ENCODE measurements at regions of chr1 and their contacts with region 1.

Region 1: DNA sequence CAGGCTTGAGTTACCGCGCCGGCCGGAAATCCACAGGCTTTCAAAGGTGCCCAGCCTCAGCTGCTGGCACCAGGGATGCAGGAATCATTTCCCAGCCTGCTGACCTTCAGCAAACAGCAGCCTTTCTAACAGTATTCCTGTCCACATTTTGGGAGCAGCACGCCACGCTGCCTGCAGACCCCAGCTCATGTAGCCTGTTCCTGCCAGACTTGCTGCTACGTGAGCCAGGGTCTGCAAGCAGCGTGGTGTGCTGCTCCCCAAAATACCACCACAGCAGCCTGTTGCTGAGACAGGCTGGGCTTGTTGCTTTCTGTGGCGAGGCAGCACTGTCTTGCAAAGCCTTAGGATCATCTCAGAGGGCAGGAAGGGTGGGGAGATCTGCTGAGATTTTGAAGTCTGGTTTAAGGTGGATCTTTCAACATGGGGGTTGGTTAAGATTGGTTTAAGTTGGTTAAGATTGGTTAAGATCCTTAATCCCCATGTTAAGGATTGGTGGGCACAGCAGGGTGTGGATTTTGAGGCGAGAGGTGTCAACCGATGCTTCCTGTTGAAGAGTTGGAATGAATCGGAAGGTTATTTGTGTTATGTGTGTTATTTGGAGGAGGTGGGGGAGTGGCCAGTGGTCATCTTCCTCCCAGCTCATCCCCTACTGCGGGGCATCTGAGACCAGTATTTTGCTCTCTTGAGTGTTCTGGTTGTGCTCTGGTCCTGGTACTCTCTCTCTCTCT is 12.9 kb downstream of the FAAH start:
- DNase-seq: no peak
- CTCF ChIP-seq: no peak

Region 2: DNA sequence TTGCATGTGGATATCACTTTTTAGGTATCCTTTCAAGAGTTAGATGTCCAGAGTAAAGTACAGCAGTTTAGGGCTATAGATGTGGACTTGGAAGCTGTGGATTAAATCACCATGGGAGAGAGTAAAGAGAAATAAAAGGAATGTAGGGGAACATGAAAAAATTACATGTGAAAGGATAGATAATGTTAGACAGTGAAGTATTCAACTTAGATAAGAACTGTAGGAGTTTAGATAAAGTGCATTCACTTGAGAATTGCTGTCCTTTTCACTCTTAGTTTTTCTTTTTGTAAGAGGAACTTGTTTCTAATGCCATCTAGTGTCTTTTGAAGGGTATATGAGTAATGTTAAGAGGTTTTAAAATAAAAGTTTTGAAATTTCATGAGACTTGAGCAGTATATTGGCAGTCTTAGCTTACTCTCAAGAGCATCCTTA is 563.6 kb before region 1 on chr1:
- CTCF ChIA-PET with region 1: no interaction called
- POLR2A ChIA-PET with region 1: no interaction called
- DNase-seq: peak; percentile 32
- CTCF ChIP-seq: peak; percentile 24

Region 3: GRCh38 chr1:46303038-46303871 is 103.8 kb before region 1 on chr1 and contains the starts of genes LRRC41 and UQCRH:
- CTCF ChIA-PET with region 1: no interaction called
- POLR2A ChIA-PET with region 1: no interaction called
- DNase-seq: peak; percentile 91
- CTCF ChIP-seq: no peak

Region 4: GRCh38 chr1:46418976-46419375 is 11.9 kb after region 1 on chr1:
- CTCF ChIA-PET with region 1: interaction called, 11 read pairs
- POLR2A ChIA-PET with region 1: no interaction called
- DNase-seq: no peak
- CTCF ChIP-seq: no peak